HepG2 (cell line): ENCODE measurements at regions of chr17 and their contacts with region 1.

Region 1: GRCh38 chr17:57535249-57535966 is 209.7 kb downstream of the CCDC182 start:
- DNase-seq: no peak
- ATAC-seq: no peak
- H3K4me3 ChIP-seq: no peak overlapping the region
- H3K27ac ChIP-seq: peak overlapping the region; percentile 14
- H3K4me1 ChIP-seq: peaks cover 97% of the 10 kb centered on the region
- H3K27me3 ChIP-seq: no peaks in the 10 kb centered on the region
- CTCF ChIP-seq: no peak
- EP300 ChIP-seq: peak in 1 of 2 experiments; percentile 18; a peak in 1 of 4 replicates
- POLR2A ChIP-seq: no peak
- RAD21 ChIP-seq: no peak

Region 2: DNA sequence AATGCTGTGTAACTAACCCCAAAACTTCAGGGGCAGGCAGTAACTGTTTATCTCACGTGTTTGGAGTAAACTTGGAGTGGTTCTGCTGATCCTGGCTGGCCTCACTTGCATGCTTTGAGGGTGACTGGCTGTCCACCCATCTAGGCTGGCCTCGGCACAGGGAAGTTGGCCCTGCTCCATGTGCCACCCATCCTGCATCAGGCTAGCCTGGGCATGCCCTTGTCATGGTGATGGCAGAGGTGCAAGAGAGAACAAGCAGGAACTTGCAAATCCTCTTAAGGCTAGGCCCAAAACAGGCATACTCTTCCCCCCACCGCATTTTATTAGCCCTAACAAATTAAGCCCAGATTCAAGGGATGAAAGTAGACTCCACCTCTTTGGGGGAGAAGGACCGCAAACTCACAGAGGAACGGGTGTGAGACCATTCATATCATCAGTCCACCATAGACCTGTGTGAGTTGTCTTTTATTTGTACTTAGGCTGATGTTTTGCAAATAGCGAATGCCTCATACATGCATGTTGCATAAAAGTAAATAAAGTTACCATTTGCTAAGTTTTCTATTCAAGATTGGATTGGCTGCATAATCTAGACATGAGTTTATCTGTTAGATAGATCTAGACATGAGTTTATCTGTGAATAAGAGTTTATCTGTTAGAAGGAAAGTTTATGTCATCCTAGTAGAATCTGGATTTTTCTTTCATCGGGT is 11.3 kb before region 1 on chr17:
- CTCF ChIA-PET with region 1: no interaction called
- POLR2A ChIA-PET with region 1: interaction called, 70 read pairs
- in situ Hi-C with region 1: no loop called
- intact Hi-C with region 1: no loop called
- DNase-seq: no peak
- ATAC-seq: no peak
- H3K4me3 ChIP-seq: no peak overlapping the region
- H3K27ac ChIP-seq: peak overlapping the region; percentile 18
- H3K4me1 ChIP-seq: peaks cover 87% of the 10 kb centered on the region
- H3K27me3 ChIP-seq: no peaks in the 10 kb centered on the region
- CTCF ChIP-seq: no peak
- EP300 ChIP-seq: no peak
- POLR2A ChIP-seq: no peak
- RAD21 ChIP-seq: no peak

Region 3: GRCh38 chr17:57577751-57578607 is 42.6 kb after region 1 on chr17:
- CTCF ChIA-PET with region 1: no interaction called
- POLR2A ChIA-PET with region 1: interaction called, 11 read pairs
- in situ Hi-C with region 1: no loop called
- intact Hi-C with region 1: no loop called
- DNase-seq: peak; percentile 95
- ATAC-seq: peak; percentile 80
- H3K4me3 ChIP-seq: peak overlapping the region; percentile 17 to 56 (median 24); a peak in 5 of 6 replicates
- H3K27ac ChIP-seq: peak overlapping the region; percentile 75
- H3K4me1 ChIP-seq: peaks cover 84% of the 10 kb centered on the region
- H3K27me3 ChIP-seq: no peaks in the 10 kb centered on the region
- CTCF ChIP-seq: no peak; the same call in 1 of the 2 replicates
- EP300 ChIP-seq: peak; percentile 77 to 96; a peak in 3 of 4 replicates
- POLR2A ChIP-seq: 0 out of 4 replicates have a peak, but pooled peaks of 1 of the 2 experiments have one; percentile 13
- RAD21 ChIP-seq: no peak

Region 4: DNA sequence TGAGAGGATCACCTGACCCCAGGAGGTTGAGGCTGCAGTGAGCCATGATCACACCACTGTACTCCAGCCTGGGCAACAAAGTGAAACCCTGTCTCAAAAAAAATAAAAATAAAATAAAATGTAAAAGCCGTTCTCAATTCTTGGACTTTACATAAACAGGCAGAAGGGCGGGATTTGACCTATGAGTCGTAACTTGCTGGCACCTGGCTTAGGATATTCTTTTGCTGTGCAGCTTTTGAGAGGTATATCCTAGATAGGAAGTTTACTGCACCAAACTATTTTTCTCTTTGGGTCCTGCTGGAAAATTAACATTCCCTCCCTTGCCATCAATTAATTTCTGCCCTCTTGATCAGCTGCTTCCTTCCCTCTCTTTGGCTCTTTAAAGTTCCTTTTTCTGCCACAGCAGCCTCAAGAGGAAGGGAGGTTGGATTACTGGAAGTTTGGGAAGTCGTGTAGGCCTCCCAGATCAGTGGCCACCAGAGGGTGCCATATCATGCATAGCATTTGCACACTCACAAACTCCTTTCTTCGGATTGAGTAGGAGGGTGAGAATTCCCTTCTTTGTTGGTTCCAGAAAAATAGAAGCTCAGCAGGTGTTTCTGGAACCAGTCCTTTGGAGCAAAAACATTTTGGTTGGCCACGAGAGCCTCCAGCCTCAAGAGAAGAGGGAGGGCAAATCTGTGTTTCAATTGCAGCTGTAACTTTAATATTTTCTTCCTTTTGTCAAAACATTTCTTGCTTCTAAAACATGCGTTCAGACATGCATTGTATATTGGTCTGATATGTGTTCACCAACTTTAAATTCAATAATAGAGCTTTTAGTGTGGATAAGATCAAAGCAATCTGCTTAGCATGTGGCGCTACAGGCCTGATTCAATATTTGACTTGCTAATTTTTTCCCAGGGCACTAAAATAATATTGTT is 62.4 kb after region 1 on chr17:
- CTCF ChIA-PET with region 1: no interaction called
- POLR2A ChIA-PET with region 1: no interaction called
- in situ Hi-C with region 1: no loop called
- intact Hi-C with region 1: no loop called
- DNase-seq: peak; percentile 67
- ATAC-seq: peak; percentile 78
- H3K4me3 ChIP-seq: no peak overlapping the region
- H3K27ac ChIP-seq: peak overlapping the region; percentile 33
- H3K4me1 ChIP-seq: peaks cover 13% of the 10 kb centered on the region
- H3K27me3 ChIP-seq: no peaks in the 10 kb centered on the region
- CTCF ChIP-seq: peak; percentile 88
- EP300 ChIP-seq: no peak
- POLR2A ChIP-seq: no peak
- RAD21 ChIP-seq: peak; percentile 76